Activated CD4-positive, alpha-beta T cell treated with anti-CD3 and anti-CD28 coated beads, Interleukin-2, amount 10 ng/mL, durations not matched to agents 7 days and 5 days (primary cell): ENCODE measurements at regions of chr1 and their contacts with region 1.

Region 1: DNA sequence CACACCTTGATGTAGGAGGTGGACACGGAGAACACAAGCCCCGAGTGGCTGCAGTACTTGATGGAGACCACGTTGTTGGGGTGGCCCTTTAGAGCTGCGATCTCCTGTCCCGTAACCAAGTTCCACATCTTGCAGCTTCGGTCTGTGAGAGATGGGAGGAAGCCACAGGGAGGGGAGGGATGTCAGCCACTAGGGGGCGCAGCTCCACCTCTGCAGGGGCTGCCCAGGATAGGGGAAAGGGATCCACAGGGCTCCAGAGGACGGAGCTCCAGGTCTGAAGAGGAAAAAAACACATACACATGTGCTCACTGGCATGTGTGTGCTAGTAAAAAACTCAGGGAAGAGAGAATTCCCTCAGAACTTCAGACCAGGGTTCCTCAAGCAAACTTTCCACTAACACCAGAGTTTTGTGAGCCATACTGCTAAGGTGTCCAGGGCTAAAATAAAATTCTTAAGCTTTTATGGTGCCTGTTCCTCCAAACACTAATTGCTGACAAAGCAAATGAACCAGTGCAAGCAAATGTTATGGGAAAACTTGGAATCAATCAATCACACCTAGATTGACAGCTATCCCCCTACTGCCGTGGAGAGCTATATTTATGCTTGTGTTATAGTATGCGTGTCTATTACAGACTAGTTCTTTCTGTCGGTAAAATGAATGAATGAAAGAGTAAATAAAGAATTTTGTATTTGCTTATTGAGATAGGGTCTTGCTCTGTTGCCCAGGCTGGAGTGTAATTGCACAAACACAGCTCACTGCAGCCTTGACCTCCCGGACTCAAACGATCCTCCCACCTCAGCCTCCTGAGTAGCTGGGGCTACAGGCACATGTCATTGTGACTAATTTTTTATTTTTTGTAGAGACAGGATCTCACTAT is 43.7 kb downstream of the KIF21B start:
- DNase-seq: peak; percentile 72
- H3K4me3 Mint-ChIP-seq: no peak overlapping the region
- H3K27ac Mint-ChIP-seq: no peak overlapping the region
- H3K4me1 Mint-ChIP-seq: no peaks in the 10 kb centered on the region
- H3K27me3 Mint-ChIP-seq: no peaks in the 10 kb centered on the region

Region 2: GRCh38 chr1:200992382-200993048 is 12.7 kb after region 1 on chr1:
- CTCF ChIA-PET with region 1: interaction called, 13 read pairs
- POLR2A ChIA-PET with region 1: no interaction called
- DNase-seq: no peak
- H3K4me3 Mint-ChIP-seq: no peak overlapping the region
- H3K27ac Mint-ChIP-seq: no peak overlapping the region
- H3K4me1 Mint-ChIP-seq: no peaks in the 10 kb centered on the region
- H3K27me3 Mint-ChIP-seq: no peaks in the 10 kb centered on the region